ENCODE measurements at regions of chr17 and their contacts with region 1.

Region 1: DNA sequence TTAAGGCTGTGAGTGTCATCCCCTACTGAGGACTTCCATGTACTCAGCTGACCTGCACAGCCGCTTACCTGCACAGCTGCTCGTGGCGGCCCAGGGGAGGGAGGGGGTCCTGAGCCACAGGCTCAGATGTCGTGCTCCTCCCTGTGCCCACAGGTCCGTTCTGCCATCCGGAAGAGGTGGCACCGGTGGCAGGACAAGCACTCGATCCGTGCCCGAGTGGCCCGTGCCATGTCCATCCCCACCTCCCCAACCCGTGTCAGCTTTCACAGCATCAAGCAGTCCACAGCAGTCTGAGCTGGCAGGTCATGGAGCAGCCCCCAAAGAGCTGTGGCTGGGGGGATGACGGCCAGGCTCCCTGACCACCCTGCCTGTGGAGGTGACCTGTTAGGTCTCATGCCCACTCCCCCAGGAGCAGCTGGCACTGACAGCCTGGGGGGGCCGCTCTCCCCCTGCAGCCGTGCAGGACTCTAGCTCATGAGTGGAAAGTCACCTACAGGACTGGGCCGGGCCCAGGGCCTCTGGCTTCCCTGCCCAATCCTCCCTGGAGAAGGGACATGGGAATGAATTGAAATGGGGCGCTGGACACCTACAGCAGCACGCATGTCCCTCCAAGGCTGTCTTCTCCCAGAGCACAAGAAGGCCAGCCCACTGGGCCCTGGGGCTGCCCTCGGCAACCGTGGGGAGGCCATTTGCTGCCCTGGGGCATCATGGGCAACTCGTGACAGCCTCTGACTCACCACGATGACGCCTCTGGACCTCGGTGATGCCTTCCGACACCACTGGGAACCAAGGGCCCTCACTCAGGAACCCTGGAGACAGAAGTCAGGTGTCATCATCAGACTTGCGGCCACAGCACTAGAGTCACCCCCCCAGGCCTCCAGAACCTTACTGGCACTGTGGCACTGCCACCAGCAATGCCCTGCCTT is 9.9 kb upstream of the SPPL2C start:
- DNase-seq: peak in 1 of 6 donors; percentile 56
- ATAC-seq: no peak
- H3K4me3 ChIP-seq: no peak overlapping the region
- H3K27ac ChIP-seq: no peak overlapping the region
- H3K4me1 ChIP-seq: no peaks in the 10 kb centered on the region
- H3K27me3 ChIP-seq: no peaks in the 10 kb centered on the region
- CTCF ChIP-seq: no peak

Region 2: DNA sequence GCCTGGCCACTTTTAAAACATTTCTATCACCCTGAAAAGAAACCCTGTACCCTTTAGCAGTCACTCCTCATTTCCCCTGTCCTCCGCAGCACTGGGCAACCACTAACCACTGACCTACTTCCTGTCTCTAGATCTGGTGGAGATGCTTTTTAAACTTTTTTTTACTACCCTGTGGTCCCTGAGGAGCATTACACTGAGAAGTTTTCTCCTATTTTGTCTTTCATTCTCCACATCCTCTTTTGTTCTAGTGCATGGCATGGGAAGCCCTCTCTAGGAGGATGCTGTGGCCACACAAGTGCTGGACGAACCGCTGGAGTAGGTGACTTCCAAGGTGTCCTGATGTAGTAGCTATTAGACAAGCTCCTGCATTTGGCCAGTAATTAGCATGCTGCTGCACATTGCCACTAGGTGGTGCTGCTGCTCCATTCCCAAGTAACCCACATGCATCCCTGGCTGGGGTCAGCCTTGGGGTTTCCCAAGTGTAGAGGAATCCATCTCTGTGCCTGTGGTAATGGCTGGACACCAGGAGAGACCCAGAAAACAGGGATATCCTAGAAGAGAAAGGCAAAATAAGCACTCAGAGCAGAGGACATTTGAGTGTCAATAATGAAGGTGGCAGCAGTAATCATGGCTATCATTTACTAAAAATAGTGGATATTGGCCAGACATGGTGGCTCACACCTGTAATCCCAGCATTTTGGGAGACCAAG is 194.4 kb before region 1 on chr17:
- intact Hi-C with region 1: loop called (anchors 5 to 10 kb)
- DNase-seq: peak; percentile 48 to 82 (median 72)
- ATAC-seq: peak; percentile 75 to 96 (median 92)
- H3K4me3 ChIP-seq: no peak overlapping the region
- H3K27ac ChIP-seq: no peak overlapping the region
- H3K4me1 ChIP-seq: no peaks in the 10 kb centered on the region
- H3K27me3 ChIP-seq: peaks cover 0 to 3% (median 0%) of the 10 kb centered on the region in 4 donors
- CTCF ChIP-seq: peak; percentile 89 to 94 (median 92)

Measured in pancreas (tissue), 10 donors.